Adrenal gland (tissue), 19 donors: ENCODE measurements at regions of chr18 and their contacts with region 1.

Region 1: GRCh38 chr18:41466436-41467160 is 488.4 kb upstream of the PIK3C3 start:
- DNase-seq: no peak
- H3K4me3 ChIP-seq: no peak overlapping the region
- H3K27ac ChIP-seq: no peak overlapping the region
- H3K4me1 ChIP-seq: no peaks in the 10 kb centered on the region
- H3K27me3 ChIP-seq: no peaks in the 10 kb centered on the region
- CTCF ChIP-seq: no peak
- POLR2A ChIP-seq: no peak

Region 2: DNA sequence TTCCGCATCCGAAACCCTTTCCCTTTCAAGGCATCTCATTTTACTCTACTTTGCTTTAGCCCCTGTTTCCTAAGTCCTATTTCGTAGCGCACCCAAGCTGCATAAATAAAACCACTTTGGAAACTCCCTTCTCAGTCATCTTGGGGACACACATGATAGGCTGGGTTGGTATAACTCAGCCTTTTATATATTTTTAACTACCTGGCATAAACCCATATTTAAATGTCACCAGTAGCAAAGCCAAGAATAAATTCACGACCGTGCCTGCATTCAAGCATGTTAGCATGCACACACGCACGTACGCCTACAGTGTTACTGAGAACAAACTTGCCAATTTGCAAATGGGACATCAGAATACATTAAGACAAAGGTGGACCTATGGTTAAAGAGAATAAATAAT is 76.3 kb before region 1 on chr18:
- intact Hi-C with region 1: no loop called
- DNase-seq: no peak
- H3K4me3 ChIP-seq: no peak overlapping the region
- H3K27ac ChIP-seq: no peak overlapping the region
- H3K4me1 ChIP-seq: no peaks in the 10 kb centered on the region
- H3K27me3 ChIP-seq: no peaks in the 10 kb centered on the region
- CTCF ChIP-seq: no peak
- POLR2A ChIP-seq: no peak

Region 3: GRCh38 chr18:41524674-41525470 is 58.3 kb after region 1 on chr18:
- intact Hi-C with region 1: loop called in 1 of 2 experiments (anchors 10 kb)
- DNase-seq: no peak
- H3K4me3 ChIP-seq: no peak overlapping the region
- H3K27ac ChIP-seq: no peak overlapping the region
- H3K4me1 ChIP-seq: no peaks in the 10 kb centered on the region
- H3K27me3 ChIP-seq: no peaks in the 10 kb centered on the region
- CTCF ChIP-seq: no peak
- POLR2A ChIP-seq: no peak